Mammary epithelial cell (primary cell): ENCODE measurements at regions of chr14 and their contacts with region 1.

Region 1: DNA sequence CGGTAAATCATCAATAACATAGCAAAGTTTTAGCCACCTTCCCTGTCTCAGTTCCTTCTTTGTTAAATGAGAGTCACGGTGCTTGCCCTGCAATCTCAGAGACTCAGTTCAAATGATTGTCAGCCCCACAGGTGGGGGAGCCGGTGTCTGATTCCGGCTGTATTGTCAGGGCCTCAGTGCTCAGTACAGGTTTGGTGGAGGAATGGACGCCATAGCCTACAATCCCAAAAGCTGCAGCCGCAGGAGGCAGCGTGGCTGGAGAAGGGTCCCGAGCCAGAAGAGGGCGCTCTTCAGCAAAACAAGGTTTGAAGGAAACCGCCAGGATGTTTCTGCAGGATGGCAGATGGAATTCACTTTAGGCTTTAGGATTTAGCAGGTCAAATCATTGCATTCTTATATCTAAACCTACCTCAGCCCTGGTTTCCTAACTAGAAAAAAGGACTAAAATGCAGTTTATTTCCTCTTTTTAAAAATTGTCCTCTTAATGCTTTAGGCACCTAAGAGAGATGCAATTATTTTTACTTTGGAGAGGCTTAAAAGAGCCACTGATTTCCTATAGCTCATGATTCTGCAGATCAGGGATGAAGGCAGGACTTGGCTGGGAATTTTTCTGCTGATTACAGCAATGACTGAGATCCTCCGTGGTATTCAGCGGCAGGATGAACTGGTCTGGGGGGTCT is 29.2 kb downstream of the FOS start:
- DNase-seq: peak; percentile 65
- H3K4me3 ChIP-seq: no peak overlapping the region
- H3K27ac ChIP-seq: no peak overlapping the region
- H3K4me1 ChIP-seq: no peaks in the 10 kb centered on the region
- H3K27me3 ChIP-seq: no peaks in the 10 kb centered on the region
- CTCF ChIP-seq: peak; percentile 87 to 93

Region 2: DNA sequence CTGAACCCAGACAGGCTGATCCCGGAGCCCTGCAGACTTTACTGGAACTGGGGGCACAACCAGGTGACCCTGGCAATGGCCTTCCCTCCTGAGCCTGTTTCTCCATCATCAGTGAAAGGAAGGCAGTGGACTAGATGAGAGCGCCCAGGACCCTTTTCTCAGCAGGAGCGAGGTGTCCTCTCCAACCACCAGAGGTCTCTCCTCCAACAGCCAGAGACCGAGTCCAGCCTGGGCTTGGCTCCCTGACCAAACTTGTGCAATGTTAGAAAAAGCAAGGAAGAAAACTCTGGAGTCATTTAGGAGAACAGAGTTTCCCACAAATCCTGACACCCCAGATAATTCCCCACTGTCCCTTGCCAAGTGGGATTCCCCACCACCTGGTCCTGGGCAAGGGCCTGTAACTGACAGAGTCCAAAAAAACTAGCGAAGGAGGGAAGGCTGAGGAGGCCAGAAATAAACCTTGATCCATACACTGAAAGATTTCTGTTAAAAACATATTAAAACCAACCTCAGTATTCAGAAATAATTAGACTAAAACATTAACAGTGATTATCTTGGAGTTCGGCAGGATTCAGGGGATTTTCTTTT is 393.8 kb before region 1 on chr14:
- CTCF ChIA-PET with region 1: interaction called, 5 read pairs
- dilution Hi-C with region 1: no loop called
- in situ Hi-C with region 1: loop called (anchors 25 kb)
- intact Hi-C with region 1: loop called (anchors 1 kb)
- DNase-seq: peak; percentile 57
- H3K4me3 ChIP-seq: no peak overlapping the region
- H3K27ac ChIP-seq: no peak overlapping the region
- H3K4me1 ChIP-seq: peaks cover 27% of the 10 kb centered on the region
- H3K27me3 ChIP-seq: no peaks in the 10 kb centered on the region
- CTCF ChIP-seq: peak; percentile 79 to 90

Region 3: DNA sequence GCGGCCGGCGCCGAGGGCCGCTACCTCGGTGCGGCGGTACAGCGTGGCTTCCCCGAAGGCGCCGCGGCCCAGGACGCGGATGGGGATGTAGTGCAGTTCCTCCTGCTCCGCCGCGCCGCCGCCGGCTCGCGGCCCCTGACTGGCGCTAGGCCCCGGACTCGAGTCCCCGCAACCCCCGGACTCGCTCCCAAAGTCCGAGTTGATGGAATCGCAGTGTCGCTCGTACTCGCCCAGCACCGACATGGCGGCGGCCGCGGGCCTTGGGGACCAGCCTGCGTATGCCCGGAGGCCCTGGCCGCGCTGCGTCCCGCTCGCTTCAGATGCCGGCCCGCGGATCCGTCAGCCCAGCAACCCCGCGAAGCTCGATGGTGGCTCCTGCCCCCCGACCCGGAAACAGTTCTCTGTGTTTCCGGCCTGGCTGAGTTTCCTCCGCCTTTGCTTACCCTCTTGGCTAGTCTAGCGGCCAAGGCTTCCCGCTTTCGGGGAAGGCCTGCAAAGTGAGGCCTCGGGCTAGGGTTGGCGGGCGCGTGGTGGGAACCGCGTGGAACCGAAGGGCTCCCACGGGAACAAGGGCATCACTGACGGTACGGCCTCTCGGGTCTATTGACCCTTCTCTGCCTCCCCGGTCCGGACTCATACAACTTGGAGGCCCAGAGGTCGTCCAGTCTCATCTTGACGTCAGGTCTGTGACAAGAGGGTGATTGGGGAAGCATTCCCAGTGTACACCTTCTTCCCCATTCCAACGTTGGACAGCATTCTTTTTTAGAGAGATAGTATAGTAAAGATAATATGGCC is 181.0 kb before region 1 on chr14 and contains the start of gene NEK9:
- CTCF ChIA-PET with region 1: interaction called, 3 read pairs
- dilution Hi-C with region 1: loop called (anchors 5 kb)
- in situ Hi-C with region 1: no loop called
- intact Hi-C with region 1: loop called (anchors 1 kb)
- DNase-seq: peak; percentile 84
- H3K4me3 ChIP-seq: peak within 1 kb of the TSS; percentile 69 to 80 (median 75)
- H3K27ac ChIP-seq: peak within 1 kb of the TSS; percentile 85
- H3K4me1 ChIP-seq: peaks cover 37% of the 10 kb centered on the region
- H3K27me3 ChIP-seq: no peaks in the 10 kb centered on the region
- CTCF ChIP-seq: no peak
- total RNA-seq, gene NEK9: 31.7 to 58.0 TPM

Region 4: DNA sequence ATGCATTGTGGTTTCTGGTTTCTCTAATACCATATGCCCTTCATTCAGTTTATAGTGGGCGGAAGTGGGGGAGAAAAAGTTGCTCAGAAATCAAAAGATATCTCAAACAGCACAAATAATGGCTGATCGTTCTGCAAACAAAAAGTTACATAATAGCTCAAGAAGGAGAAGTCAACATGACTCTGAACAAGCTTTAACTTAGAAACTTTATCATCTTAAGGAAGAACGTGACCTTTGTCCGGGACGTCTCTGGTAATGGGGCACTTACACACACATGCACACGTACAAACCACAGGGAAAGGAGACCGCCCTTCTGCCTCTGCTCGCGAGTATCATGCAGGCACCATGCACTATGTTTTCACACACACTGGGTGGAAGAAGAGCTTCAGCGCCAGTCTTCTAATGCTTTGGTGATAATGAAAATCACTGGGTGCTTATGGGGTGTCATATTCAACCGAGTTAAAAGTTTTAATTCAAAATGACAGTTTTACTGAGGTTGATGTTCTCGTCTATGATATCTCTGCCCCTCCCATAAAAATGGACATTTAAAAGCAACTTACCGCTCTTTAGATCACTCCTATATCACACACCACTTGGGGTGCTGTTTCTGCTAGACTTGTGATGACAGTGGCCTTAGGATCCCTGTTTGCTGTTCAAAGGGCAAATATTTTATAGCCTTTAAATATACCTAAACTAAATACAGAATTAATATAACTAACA is 24.5 kb before region 1 on chr14:
- CTCF ChIA-PET with region 1: no interaction called
- dilution Hi-C with region 1: no loop called
- in situ Hi-C with region 1: no loop called
- intact Hi-C with region 1: no loop called
- DNase-seq: peak; percentile 44
- H3K4me3 ChIP-seq: no peak overlapping the region
- H3K27ac ChIP-seq: no peak overlapping the region
- H3K4me1 ChIP-seq: peaks cover 15% of the 10 kb centered on the region
- H3K27me3 ChIP-seq: no peaks in the 10 kb centered on the region
- CTCF ChIP-seq: peak; percentile 31 to 45

Region 5: GRCh38 chr14:75369506-75369905 is 61.7 kb after region 1 on chr14:
- CTCF ChIA-PET with region 1: no interaction called
- dilution Hi-C with region 1: loop called (anchors 5 kb)
- in situ Hi-C with region 1: no loop called
- intact Hi-C with region 1: no loop called
- DNase-seq: no peak
- H3K4me3 ChIP-seq: no peak overlapping the region
- H3K27ac ChIP-seq: no peak overlapping the region
- H3K4me1 ChIP-seq: no peaks in the 10 kb centered on the region
- H3K27me3 ChIP-seq: peaks cover 5% of the 10 kb centered on the region
- CTCF ChIP-seq: no peak

Region 6: DNA sequence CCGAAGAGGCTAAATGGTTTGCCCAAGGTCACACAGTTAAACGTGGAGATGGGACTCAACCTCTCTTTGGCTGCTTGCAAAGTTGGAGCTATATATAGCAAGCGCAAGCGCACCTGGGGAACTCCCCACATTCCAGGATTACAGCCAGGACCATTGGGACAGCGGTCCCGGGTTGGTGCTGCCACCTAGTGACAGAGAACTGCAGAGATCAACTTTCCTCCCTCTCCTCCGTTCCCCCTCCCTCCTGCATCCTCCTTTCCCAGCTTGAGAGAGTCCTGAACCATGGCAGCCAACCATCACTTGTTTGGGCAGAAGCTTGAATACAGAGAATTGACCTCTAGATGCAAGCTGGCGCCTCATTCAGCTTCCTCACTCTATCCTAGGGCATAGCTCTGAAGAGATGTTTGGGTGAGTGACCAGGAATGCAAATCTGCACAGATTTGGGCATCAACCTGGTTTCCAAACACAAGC is 253.2 kb after region 1 on chr14:
- CTCF ChIA-PET with region 1: no interaction called
- dilution Hi-C with region 1: loop called (anchors 5 kb)
- in situ Hi-C with region 1: loop called (anchors 5 kb)
- intact Hi-C with region 1: loop called (anchors 1 kb)
- DNase-seq: peak; percentile 86
- H3K4me3 ChIP-seq: no peak overlapping the region
- H3K27ac ChIP-seq: no peak overlapping the region
- H3K4me1 ChIP-seq: peaks cover 16% of the 10 kb centered on the region
- H3K27me3 ChIP-seq: no peaks in the 10 kb centered on the region
- CTCF ChIP-seq: peak; percentile 91 to 97

Region 7: GRCh38 chr14:75982266-75983018 is 674.6 kb after region 1 on chr14:
- CTCF ChIA-PET with region 1: no interaction called
- dilution Hi-C with region 1: no loop called
- in situ Hi-C with region 1: no loop called
- intact Hi-C with region 1: loop called (anchors 5 kb)
- DNase-seq: peak; percentile 72
- H3K4me3 ChIP-seq: peak overlapping the region; percentile 57 to 62 (median 61)
- H3K27ac ChIP-seq: peak overlapping the region; percentile 59
- H3K4me1 ChIP-seq: peaks cover 34% of the 10 kb centered on the region
- H3K27me3 ChIP-seq: no peaks in the 10 kb centered on the region
- CTCF ChIP-seq: peak; percentile 28 to 71